Right ventricle myocardium superior (tissue), 1 donor: ENCODE measurements at regions of chr9 and their contacts with region 1.

Region 1: DNA sequence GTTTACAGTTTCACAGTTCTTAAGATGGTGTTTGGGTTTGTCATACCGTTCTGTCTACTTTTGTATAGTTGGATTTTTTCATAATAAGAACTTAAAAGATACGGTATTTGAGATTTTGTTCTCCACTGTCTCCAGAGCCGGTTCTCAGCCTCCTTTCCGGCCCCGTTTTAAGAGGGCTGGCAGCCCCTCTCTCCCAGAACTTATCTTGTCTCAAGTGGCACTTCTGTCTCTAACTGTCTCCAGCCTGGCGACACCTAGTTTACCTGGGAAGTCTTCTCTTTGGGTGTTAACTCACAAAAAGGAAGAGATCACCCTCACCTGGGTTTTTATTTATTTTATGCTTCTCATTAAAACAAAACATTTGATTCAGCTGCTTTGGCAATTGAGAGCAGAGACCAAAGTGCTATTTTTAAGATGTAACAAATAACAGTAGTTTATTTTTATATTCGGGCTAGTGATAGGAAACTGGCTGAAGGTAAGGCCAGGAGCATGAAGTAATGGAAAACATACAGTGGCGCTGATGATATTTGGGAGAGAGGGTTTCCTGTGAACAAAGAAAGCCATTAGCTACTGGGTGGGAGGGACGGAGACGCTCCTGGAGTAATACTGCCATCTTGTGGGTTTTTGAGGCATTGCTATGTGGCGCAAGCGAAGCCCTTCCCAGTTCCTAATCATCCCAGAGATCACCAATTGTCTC is 48.3 kb downstream of the ACER2 start:
- DNase-seq: peak; percentile 54
- ATAC-seq: peak; percentile 97

Region 2: GRCh38 chr9:19048966-19049916 is 407.9 kb before region 1 on chr9 and contains the start of gene RRAGA:
- intact Hi-C with region 1: loop called (anchors 5 kb)
- DNase-seq: peak; percentile 97
- ATAC-seq: peak; percentile 98
- total RNA-seq, gene RRAGA: 69.4 TPM

Region 3: GRCh38 chr9:19174127-19174912 is 282.8 kb before region 1 on chr9:
- intact Hi-C with region 1: loop called (anchors 5 kb)
- DNase-seq: peak; percentile 77
- ATAC-seq: peak; percentile 92

Region 4: GRCh38 chr9:19379697-19380046 is 77.5 kb before region 1 on chr9:
- intact Hi-C with region 1: loop called (anchors 5 kb)
- DNase-seq: peak; percentile 64
- ATAC-seq: peak; percentile 69